Activated CD4-positive, alpha-beta T cell treated with anti-CD3 and anti-CD28 coated beads for 36 hours (primary cell): ENCODE measurements at regions of chr1 and their contacts with region 1.

Region 1: DNA sequence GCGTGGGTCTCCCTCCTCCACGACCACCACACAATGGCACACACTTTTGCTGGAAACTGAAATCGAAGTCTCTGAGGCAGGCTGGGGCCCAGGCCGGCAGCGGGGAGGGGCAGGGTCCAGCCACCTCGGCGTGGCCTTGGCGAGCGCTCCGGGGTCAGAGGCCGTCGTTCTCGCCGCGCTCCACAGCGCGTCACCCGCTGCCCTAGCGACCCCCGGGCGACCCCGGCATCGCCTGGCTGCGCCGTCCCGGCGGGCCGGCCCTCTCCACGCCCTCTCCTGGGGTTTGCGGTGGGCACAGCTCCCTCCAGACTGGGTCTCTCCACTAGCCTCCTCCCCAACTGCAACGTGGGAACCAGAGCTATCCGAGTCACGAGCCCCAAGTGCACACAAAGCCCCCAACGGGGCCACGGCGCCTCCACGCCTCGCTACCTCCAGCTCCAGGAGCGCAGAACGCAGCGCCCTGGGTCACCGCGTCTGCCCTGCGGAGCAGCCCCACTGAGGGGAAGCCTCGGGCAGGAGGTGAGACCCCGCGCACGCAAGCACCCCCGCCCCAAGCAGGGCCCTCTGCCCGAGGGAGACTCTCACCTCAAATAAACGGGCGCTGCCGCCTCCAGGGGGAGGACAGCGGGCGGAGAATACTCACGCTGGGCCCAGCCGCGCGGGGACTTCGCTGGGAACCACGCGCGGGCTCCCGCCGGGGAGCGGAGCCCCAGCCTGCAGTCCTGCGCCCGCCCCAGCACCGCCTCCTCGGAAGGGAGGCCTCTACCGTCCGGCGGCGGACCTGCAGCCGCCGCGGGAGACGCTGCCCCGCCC is 134.0 kb upstream of the BARHL2 start:
- DNase-seq: peak; percentile 90
- ATAC-seq: peak; percentile 99
- H3K4me3 Mint-ChIP-seq: peak overlapping the region; percentile 69
- H3K27ac Mint-ChIP-seq: no peak overlapping the region
- H3K4me1 Mint-ChIP-seq: peaks cover 11% of the 10 kb centered on the region
- H3K27me3 Mint-ChIP-seq: peaks cover 54% of the 10 kb centered on the region

Region 2: DNA sequence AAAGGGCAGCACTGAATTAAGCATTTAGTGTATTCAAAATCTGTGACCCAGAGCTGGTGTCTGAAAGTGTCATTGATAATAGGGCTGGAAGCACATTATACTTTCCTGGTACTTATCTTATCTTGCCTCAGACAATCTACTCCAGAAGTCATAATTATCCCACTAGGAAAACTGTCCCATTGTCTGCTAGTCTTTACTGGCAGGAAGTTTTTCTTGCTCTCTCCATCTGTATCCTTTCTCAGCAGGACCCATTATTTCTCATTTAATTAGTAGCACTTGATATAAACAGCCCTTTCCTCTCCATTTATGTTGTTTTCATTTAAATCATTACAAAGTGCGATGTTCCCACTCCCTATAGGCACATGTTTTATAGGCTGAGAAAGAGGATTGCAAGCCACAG is 97.5 kb before region 1 on chr1:
- CTCF ChIA-PET with region 1: no interaction called
- POLR2A ChIA-PET with region 1: interaction called, 14 read pairs
- intact Hi-C with region 1: no loop called
- DNase-seq: no peak
- ATAC-seq: no peak
- H3K4me3 Mint-ChIP-seq: no peak overlapping the region
- H3K27ac Mint-ChIP-seq: no peak overlapping the region
- H3K4me1 Mint-ChIP-seq: no peaks in the 10 kb centered on the region
- H3K27me3 Mint-ChIP-seq: peaks cover 27% of the 10 kb centered on the region

Region 3: DNA sequence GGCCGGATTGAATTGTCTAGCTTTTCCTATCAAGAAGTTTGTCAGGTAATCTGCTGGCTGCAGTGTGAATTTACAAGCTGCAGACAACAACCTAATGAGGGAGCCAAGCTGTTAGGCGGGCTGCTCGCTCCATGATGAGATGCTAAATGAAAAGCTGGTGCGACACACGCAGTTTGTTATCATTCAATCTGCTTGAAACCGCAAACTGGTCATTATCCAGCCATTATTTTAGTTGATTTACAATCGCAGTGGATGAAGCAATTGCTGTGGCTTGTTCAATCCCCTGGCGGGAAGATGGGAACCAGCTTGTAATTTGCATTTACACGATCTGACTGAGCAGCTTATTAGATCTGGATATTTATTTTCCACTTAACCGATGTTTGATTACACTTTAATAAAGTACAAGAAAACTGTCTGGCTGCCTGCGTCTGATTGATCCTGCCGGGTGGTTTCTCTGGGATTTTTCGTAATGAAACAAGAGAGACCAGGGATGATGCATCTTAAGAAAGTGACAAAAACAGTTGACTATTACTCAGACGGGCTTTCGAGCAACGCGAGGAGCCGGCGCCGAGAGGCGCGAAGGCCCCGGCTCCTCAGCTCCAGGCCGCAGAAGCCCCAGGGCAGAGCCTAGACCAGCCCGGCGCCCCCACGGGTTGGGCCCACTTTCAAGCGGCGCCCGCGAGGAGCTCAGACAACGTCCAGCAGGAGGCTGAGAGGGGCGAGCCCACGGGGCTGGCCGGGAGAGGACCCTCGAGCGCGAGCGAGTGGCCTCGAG is 16.0 kb before region 1 on chr1:
- CTCF ChIA-PET with region 1: interaction called, 3 read pairs
- POLR2A ChIA-PET with region 1: no interaction called
- intact Hi-C with region 1: loop called in 1 of 2 experiments (anchors 1 kb)
- DNase-seq: peak; percentile 60
- ATAC-seq: peak; percentile 87
- H3K4me3 Mint-ChIP-seq: no peak overlapping the region
- H3K27ac Mint-ChIP-seq: no peak overlapping the region
- H3K4me1 Mint-ChIP-seq: peaks cover 23% of the 10 kb centered on the region
- H3K27me3 Mint-ChIP-seq: peaks cover 75% of the 10 kb centered on the region

Region 4: GRCh38 chr1:90964444-90965035 is 113.4 kb after region 1 on chr1:
- CTCF ChIA-PET with region 1: interaction called, 3 read pairs
- POLR2A ChIA-PET with region 1: no interaction called
- intact Hi-C with region 1: loop called in 1 of 2 experiments (anchors 5 kb)
- DNase-seq: no peak
- ATAC-seq: no peak
- H3K4me3 Mint-ChIP-seq: no peak overlapping the region
- H3K27ac Mint-ChIP-seq: no peak overlapping the region
- H3K4me1 Mint-ChIP-seq: peaks cover 38% of the 10 kb centered on the region
- H3K27me3 Mint-ChIP-seq: no peaks in the 10 kb centered on the region